Activated T-helper 1 cell treated with anti-CD3 and anti-CD28 coated beads, Interleukin-12 subunit alpha, Interleukin-12 subunit beta, Interleukin-2, Interleukin-4 antibody, amounts not matched to agents 30 ng/mL and 10 ng/mL and 1 ng/mL, durations not matched to agents 14 hours and 24 hours and 36 hours (primary cell): ENCODE measurements at regions of chr1 and their contacts with region 1.

Region 1: DNA sequence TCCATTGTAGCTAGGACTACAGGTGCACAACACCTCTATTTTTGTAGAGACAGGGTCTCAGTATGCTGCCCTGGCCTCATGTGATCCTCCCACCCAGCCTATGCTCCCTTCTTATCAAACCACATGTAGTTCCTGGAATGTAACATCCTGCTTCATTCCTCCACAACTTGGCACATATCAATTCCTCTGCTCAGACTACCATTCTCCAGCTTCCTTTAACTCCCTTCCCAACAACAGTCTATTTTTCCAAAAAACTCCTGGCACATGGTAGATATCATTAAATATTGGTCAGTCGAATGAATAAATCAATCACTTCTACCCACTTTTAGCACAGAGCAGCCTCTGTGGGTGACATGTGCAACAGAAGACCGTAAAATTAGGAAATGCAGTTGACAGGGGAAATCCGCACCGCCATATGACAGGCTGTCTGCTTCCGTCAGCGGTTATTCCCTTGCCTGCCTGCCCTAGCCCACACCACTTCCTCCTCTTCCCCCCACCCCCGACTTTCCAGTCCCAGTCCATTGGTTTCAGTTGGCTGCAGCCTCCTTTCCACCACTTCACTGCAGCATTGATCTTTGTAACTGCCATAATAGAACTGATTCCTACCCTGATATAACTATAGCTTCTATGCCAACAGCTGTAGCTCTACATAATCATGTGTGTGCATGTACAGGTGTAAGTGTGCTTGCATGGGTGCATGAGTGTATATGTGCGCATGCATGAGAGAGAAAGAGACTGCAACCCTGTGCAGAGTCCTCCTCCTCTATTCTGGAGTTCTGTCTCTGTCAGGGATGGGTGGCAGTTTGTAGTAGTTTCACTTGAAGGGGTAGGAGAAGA is 6.8 kb upstream of the AKR1A1 start:
- DNase-seq: peak; percentile 75
- H3K4me3 Mint-ChIP-seq: peak overlapping the region; percentile 38
- H3K27ac Mint-ChIP-seq: peak overlapping the region; percentile 54
- H3K4me1 Mint-ChIP-seq: peaks cover 36% of the 10 kb centered on the region
- H3K27me3 Mint-ChIP-seq: peaks cover 10% of the 10 kb centered on the region

Region 2: DNA sequence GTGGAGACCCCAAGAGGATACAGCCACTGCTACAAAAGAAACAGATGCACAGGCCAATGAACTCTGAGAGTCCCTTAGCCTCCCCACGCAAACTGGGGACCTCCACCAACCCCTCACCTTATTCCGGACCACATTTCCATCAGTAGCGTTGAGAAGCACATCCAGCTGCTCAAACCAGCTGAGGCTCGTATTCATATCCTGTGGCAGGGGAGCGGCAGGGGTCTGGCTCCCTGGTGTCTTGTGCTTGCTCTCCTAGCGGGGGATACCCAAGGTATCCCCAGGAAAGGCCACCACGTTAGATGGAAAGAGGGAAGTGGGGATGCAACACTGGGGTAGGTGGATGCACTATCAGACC is 44.4 kb before region 1 on chr1:
- intact Hi-C with region 1: loop called (anchors 1 kb)
- DNase-seq: no peak
- H3K4me3 Mint-ChIP-seq: peak overlapping the region; percentile 93
- H3K27ac Mint-ChIP-seq: peak overlapping the region; percentile 83
- H3K4me1 Mint-ChIP-seq: peaks cover 37% of the 10 kb centered on the region
- H3K27me3 Mint-ChIP-seq: no peaks in the 10 kb centered on the region